Colonic mucosa (tissue), 4 donors: ENCODE measurements at regions of chr11 and their contacts with region 1.

Region 1: GRCh38 chr11:9259981-9260837 is 4.9 kb downstream of the DENND5A start:
- DNase-seq: no peak
- H3K4me3 ChIP-seq: no peak overlapping the region
- H3K27ac ChIP-seq: no peak overlapping the region
- H3K4me1 ChIP-seq: no peaks in the 10 kb centered on the region
- H3K27me3 ChIP-seq: no peaks in the 10 kb centered on the region
- CTCF ChIP-seq: no peak

Region 2: GRCh38 chr11:9231848-9232177 is 28.4 kb before region 1 on chr11:
- intact Hi-C with region 1: loop called (anchors 2 kb)
- DNase-seq: no peak
- H3K4me3 ChIP-seq: no peak overlapping the region
- H3K27ac ChIP-seq: no peak overlapping the region
- H3K4me1 ChIP-seq: no peaks in the 10 kb centered on the region
- H3K27me3 ChIP-seq: no peaks in the 10 kb centered on the region
- CTCF ChIP-seq: no peak